BJ (cell line): ENCODE measurements at regions of chr7 and their contacts with region 1.

Region 1: DNA sequence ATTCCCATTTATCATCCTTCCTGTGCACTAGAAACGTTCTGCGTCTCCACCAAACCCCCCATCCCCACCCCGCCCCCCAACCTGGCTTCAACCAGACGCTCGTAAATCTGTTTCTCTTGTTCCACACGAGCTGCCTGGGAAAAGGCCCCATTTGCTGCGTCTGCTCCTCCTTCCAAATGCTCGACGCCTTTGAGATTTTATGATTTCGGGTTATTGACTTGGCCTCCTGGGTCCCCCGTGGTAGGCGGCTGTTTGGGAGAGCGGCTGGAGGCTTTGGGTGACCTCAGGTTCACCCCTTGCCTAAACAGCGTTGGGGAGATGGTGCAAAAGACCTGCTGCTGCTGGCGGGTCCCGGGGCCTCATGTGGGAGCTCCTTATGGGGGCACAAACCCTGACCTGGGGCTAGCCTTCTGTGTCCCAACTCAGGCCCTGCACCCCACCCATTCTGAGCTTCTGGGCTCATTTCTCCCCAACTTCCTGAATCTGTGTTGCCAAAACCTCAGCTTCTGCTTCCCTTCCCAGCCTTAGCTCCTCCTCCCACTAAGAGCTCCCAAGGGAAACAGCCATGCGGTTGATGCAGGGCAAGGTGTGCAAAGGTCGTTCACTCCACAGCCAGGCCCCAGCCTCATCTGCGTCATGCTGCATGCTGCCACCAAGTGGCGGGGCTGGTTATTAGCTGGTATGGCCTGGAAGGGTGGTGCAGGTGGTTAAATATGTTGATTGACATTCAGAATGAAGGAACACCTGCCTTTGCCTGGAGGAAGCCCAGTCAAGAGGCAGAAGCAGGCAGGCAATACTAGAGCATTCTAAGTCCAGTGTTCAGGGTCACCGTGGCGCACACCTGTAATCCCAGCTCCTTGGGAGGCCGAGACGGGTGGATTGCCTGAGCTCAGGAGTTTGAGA is 49.1 kb upstream of the ELN start:
- DNase-seq: no peak
- H3K4me3 ChIP-seq: no peak overlapping the region
- H3K27me3 ChIP-seq: no peaks in the 10 kb centered on the region
- CTCF ChIP-seq: peak; percentile 45

Region 2: GRCh38 chr7:73690646-73691045 is 288.3 kb before region 1 on chr7:
- CTCF ChIA-PET with region 1: no interaction called
- POLR2A ChIA-PET with region 1: no interaction called
- DNase-seq: no peak
- H3K4me3 ChIP-seq: no peak overlapping the region
- H3K27me3 ChIP-seq: no peaks in the 10 kb centered on the region
- CTCF ChIP-seq: no peak

Region 3: GRCh38 chr7:73966943-73967831 is 11.7 kb before region 1 on chr7:
- CTCF ChIA-PET with region 1: interaction called, 10 read pairs
- POLR2A ChIA-PET with region 1: no interaction called
- DNase-seq: no peak
- H3K4me3 ChIP-seq: no peak overlapping the region
- H3K27me3 ChIP-seq: no peaks in the 10 kb centered on the region; the same call in 1 of the 2 replicates
- CTCF ChIP-seq: no peak

Region 4: DNA sequence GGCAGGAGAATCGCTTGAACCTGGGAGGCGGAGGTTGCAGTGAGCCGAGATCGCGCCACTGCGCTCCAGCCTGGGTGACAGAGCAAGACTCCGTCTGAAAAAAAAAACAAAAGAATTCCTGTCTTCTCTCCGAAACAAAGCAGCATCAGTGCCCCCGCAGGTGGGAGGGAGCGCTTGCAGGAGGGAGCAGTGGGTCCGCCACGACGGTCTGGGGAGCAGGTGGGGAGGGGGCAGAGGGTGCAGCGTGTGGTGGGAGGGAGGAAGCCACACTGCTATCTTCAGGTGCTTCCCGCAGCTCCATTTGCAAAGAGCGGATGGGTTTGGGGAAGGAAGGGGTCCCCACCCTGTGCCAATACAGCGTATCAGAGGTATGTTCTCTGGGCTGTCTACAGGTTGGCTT is 136.4 kb after region 1 on chr7:
- CTCF ChIA-PET with region 1: no interaction called
- POLR2A ChIA-PET with region 1: no interaction called
- DNase-seq: no peak
- H3K4me3 ChIP-seq: no peak overlapping the region
- H3K27me3 ChIP-seq: no peaks in the 10 kb centered on the region
- CTCF ChIP-seq: no peak